Naive thymus-derived CD8-positive, alpha-beta T cell (primary cell): ENCODE measurements at regions of chr14 and their contacts with region 1.

Region 1: DNA sequence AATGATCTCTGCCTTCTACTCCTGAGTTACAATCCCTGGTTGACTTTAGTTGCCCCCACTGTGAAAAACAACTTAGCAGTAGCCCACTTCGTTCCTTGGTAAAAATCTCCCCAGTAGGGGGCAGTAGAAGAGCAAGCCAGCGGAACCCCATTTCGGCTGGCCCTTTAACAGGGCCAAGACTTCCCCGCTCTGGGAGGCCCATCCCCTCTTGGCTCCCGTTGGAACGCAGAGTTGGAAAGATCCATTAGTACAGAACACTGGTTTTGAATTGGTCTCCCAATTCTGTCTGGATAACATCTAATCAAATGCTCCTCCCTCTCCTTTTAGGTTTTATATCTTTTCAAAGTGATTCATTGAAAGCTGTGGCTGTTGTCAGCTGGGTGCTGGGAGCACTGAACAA is 1133.3 kb downstream of the BCL11B start:
- DNase-seq: peak; percentile 38 to 88 (median 74)
- ATAC-seq: peak; percentile 40 to 62
- H3K4me3 Mint-ChIP-seq: peak overlapping the region; percentile 85 to 97 (median 94)
- H3K27ac Mint-ChIP-seq: peak overlapping the region; percentile 96 to 100 (median 99)
- H3K4me1 Mint-ChIP-seq: peaks cover 59 to 97% (median 87%) of the 10 kb centered on the region in 4 donors
- H3K27me3 Mint-ChIP-seq: no peaks in the 10 kb centered on the region

Region 2: GRCh38 chr14:97602438-97603117 is 536.1 kb before region 1 on chr14:
- POLR2A ChIA-PET with region 1: interaction called, 21 read pairs
- DNase-seq: peak; percentile 52 to 91 (median 78)
- ATAC-seq: peak; percentile 88 to 92
- H3K4me3 Mint-ChIP-seq: no peak overlapping the region
- H3K27ac Mint-ChIP-seq: no peak overlapping the region
- H3K4me1 Mint-ChIP-seq: peaks cover 9 to 31% (median 18%) of the 10 kb centered on the region in 4 donors
- H3K27me3 Mint-ChIP-seq: no peaks in the 10 kb centered on the region

Region 3: GRCh38 chr14:97994020-97994531 is 144.6 kb before region 1 on chr14:
- POLR2A ChIA-PET with region 1: interaction called, 11 read pairs
- DNase-seq: peak in 8 of 10 donors; percentile 16 to 83 (median 67)
- ATAC-seq: peak; percentile 82 to 92
- H3K4me3 Mint-ChIP-seq: peak overlapping the region; percentile 33 to 73 (median 63)
- H3K27ac Mint-ChIP-seq: peak overlapping the region; percentile 91 to 99 (median 95)
- H3K4me1 Mint-ChIP-seq: peaks cover 41 to 87% (median 81%) of the 10 kb centered on the region in 4 donors
- H3K27me3 Mint-ChIP-seq: no peaks in the 10 kb centered on the region

Region 4: DNA sequence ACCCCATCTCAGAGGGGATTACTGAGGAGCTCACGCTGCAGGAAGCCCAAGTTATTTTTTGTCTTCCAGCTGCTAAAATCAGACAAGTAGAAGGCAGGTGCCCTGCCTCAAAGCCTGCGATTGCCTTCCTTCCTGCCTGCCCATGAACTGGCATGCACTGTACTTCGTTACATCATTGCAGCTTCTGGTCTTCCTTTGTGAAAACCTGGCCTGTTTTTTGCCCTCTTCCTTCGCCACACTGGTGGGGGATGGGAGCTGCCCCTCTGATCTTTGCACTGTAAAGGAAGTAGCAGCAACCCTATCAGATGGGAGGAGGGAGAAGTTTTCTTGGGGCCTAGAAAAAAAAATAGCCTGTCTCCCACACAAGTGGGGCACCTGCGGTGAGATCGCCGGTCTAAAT is 34.6 kb after region 1 on chr14:
- POLR2A ChIA-PET with region 1: interaction called, 343 read pairs
- DNase-seq: peak; percentile 28 to 89 (median 72)
- ATAC-seq: peak; percentile 60 to 81
- H3K4me3 Mint-ChIP-seq: peak overlapping the region; percentile 66 to 91 (median 87)
- H3K27ac Mint-ChIP-seq: peak overlapping the region; percentile 90 to 99 (median 97)
- H3K4me1 Mint-ChIP-seq: peaks cover 57 to 100% (median 98%) of the 10 kb centered on the region in 4 donors
- H3K27me3 Mint-ChIP-seq: no peaks in the 10 kb centered on the region

Region 5: GRCh38 chr14:98210045-98210672 is 71.5 kb after region 1 on chr14:
- POLR2A ChIA-PET with region 1: interaction called, 50 read pairs
- DNase-seq: peak; percentile 35 to 84 (median 58)
- ATAC-seq: peak; percentile 69 to 75
- H3K4me3 Mint-ChIP-seq: peak overlapping the region; percentile 69 to 85 (median 78)
- H3K27ac Mint-ChIP-seq: peak overlapping the region; percentile 96 to 100 (median 98)
- H3K4me1 Mint-ChIP-seq: peaks cover 57 to 98% (median 90%) of the 10 kb centered on the region in 4 donors
- H3K27me3 Mint-ChIP-seq: no peaks in the 10 kb centered on the region

Region 6: GRCh38 chr14:98350213-98350612 is 211.5 kb after region 1 on chr14:
- POLR2A ChIA-PET with region 1: no interaction called
- DNase-seq: no peak
- ATAC-seq: no peak
- H3K4me3 Mint-ChIP-seq: peak overlapping the region in 1 of 10 donors; percentile 4
- H3K27ac Mint-ChIP-seq: peak overlapping the region in 4 of 10 donors; percentile 5 to 66 (median 56)
- H3K4me1 Mint-ChIP-seq: peaks cover 7 to 58% (median 38%) of the 10 kb centered on the region in 4 donors
- H3K27me3 Mint-ChIP-seq: no peaks in the 10 kb centered on the region

Region 7: DNA sequence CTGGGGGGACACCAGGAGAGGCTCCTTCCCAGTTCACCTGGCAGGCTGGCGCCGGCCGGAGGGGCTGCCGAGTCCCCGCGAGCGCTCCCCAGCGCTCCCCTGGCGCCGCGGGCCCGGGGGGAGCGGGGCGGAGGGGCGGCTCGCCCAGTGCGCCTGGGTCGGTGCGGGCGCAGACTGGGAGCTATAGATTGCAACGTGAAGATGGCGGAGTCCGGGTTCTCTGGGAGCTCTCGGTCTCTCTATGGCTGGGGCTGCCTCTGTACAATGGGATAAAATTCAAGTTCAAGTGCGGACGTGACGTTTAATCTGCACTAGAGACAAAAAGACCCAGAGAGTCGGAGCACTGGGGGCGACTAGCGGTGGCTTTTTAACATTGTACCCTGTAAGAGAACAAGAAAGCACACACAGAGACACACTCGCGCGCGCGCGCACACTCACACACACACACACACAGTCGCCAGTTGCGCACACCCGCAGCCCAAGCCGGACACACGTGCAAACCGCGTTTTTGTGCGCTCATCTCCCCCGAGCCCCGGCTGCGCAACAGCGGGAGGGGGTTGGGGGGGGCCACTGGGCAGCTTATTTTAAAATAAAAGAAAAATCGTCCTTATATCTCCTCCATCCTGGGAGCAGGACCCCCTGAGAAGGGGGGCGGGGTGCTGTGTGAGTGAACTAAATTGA is 1133.4 kb after region 1 on chr14 and contains the start of gene BCL11B:
- POLR2A ChIA-PET with region 1: interaction called, 320 read pairs
- DNase-seq: peak; percentile 73 to 96 (median 87)
- ATAC-seq: peak; percentile 69 to 79
- H3K4me3 Mint-ChIP-seq: peak within 1 kb of the TSS; percentile 90 to 100 (median 96)
- H3K27ac Mint-ChIP-seq: peak within 1 kb of the TSS; percentile 93 to 99 (median 96)
- H3K4me1 Mint-ChIP-seq: peaks cover 13 to 56% (median 32%) of the 10 kb centered on the region in 4 donors
- H3K27me3 Mint-ChIP-seq: peaks cover 0 to 9% (median 0%) of the 10 kb centered on the region in 5 donors
- polyA plus RNA-seq, gene BCL11B: 8.2 to 12.1 (median 9.5) TPM